ENCODE measurements at regions of chr1 and their contacts with region 1.

Region 1: GRCh38 chr1:53878492-53879105 is 11.0 kb downstream of the YIPF1 start:
- DNase-seq: peak; percentile 58
- H3K4me3 ChIP-seq: no peak overlapping the region
- H3K27ac ChIP-seq: no peak overlapping the region
- H3K4me1 ChIP-seq: no peaks in the 10 kb centered on the region
- H3K27me3 ChIP-seq: no peaks in the 10 kb centered on the region
- CTCF ChIP-seq: peak; percentile 43 to 55
- POLR2A ChIP-seq: no peak

Region 2: GRCh38 chr1:53860967-53861411 is 17.6 kb before region 1 on chr1:
- CTCF ChIA-PET with region 1: interaction called, 61 read pairs
- POLR2A ChIA-PET with region 1: no interaction called
- dilution Hi-C with region 1: no loop called
- intact Hi-C with region 1: no loop called
- DNase-seq: peak; percentile 51
- H3K4me3 ChIP-seq: no peak overlapping the region
- H3K27ac ChIP-seq: no peak overlapping the region
- H3K4me1 ChIP-seq: no peaks in the 10 kb centered on the region
- H3K27me3 ChIP-seq: no peaks in the 10 kb centered on the region
- CTCF ChIP-seq: peak; percentile 79 to 85
- POLR2A ChIP-seq: no peak

Region 3: DNA sequence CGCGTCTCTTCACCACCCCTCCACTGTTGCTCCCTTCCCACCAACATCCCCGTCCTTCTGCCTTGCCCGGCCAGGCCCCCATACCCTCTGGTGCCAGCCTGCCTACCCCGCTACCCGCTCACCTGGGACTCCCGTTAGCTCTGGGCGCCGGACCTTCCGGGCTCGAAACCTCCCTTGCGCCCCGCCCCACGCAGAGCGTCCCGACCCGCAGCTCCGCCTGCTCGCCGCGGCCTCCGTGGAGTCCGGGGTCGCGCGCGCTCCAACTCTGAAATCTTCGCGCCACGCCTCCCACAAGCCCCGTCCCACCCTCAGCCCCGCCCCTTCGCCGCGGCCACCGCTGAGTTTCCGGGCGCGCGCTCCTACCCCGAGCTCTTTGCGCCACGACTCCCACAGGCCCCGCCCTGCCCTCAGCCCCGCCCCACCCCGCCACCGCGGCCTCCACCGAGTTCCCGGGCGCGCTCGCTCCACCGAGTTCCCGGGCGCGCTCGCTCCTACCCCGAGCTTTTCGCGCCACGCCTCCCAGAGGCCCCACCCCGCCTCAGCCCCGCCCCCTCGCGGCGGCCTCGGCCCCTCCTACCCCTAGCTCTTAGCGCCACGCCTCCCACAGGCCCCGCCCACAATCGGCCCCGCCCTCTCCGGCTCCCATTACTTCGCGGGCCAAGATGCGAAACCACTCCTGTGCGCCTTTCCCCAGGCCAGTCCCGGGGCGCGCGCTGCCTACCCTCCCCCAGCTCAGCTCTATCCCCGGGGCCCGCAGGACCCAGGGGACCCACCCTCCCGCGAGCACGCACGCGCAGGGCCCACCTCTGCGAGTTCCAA is 67.0 kb after region 1 on chr1 and contains the start of gene IFT25:
- CTCF ChIA-PET with region 1: interaction called, 63 read pairs
- POLR2A ChIA-PET with region 1: no interaction called
- dilution Hi-C with region 1: no loop called
- intact Hi-C with region 1: loop called (anchors 1 kb)
- DNase-seq: peak; percentile 95
- H3K4me3 ChIP-seq: peak within 1 kb of the TSS; percentile 88 to 95 (median 91)
- H3K27ac ChIP-seq: peak within 1 kb of the TSS; percentile 43
- H3K4me1 ChIP-seq: peaks cover 20% of the 10 kb centered on the region
- H3K27me3 ChIP-seq: no peaks in the 10 kb centered on the region
- CTCF ChIP-seq: no peak
- POLR2A ChIP-seq: peak; percentile 77
- total RNA-seq, gene IFT25: 31.4 and 34.0 TPM in 2 replicates

Region 4: DNA sequence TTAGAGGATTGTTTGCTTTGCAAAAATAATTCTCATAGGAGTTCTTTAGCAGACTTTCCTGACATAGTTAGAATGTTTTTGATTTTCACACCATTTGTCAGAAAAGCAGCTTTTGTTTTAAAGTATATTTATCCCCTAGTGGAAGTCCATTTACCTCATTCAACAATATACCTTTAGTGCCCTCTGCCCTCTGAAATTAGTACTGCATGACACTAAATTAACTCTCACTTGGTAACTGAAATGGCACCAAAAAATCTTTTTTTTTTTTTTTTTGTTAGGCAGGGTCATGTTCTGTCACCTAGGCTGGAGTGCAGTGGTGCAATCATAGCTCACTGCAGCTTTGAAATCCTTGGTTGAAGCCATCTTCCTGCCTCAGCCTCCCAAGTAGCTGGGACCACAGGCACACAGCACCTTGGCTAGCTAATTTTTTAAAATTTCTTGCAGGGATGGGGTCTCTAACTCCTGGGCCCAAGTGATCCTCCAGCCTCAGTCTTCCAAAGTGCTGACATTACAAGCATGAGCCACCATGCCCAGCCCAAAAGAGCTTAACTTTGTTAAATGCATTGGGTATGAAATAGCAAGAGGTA is 81.2 kb after region 1 on chr1:
- CTCF ChIA-PET with region 1: interaction called, 54 read pairs
- POLR2A ChIA-PET with region 1: no interaction called
- dilution Hi-C with region 1: no loop called
- intact Hi-C with region 1: no loop called
- DNase-seq: peak; percentile 28
- H3K4me3 ChIP-seq: no peak overlapping the region
- H3K27ac ChIP-seq: no peak overlapping the region
- H3K4me1 ChIP-seq: peaks cover 7% of the 10 kb centered on the region
- H3K27me3 ChIP-seq: no peaks in the 10 kb centered on the region
- CTCF ChIP-seq: peak; percentile 19 to 25
- POLR2A ChIP-seq: no peak

Region 5: DNA sequence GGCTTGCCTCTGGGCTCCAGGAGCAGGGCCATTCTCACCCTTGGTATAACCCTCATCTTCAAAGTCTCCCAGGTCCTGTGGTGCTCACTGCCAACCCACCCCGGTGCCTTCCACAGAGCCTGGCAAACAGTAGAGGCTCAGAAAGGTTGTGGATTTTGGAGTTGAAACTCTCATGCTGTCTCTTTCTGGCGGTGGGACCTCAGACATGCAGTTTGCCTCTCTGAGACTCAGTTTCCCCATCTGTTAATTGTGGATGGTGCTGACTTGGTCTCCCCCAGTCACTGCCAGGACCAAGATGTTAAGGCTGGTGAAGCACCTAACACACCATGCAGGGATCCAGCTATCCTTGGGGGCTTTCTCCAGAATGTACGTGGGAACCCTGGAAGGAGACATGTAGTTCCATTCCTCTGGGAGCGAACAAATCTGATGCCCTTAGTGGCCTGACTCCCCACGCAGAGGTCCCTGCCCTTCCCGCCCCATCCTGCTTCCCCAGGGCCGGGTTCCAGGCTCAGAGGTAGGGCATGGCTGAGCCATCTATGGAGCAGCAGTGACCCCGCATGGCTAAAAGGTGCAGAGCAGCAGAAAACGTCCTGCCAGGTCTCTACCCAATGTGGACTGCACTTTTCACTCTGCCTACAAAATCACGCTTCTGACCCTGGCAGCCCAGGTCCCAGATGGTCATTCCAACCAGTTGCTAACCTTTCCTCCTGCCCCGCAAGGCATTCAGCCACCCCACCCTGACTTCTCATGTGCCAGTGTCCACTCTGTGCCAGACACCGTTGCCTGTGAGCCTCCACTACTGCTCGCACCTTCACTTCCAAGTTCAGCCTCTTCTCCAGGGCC is 931.7 kb after region 1 on chr1:
- CTCF ChIA-PET with region 1: interaction called, 11 read pairs
- POLR2A ChIA-PET with region 1: no interaction called
- dilution Hi-C with region 1: no loop called
- intact Hi-C with region 1: loop called (anchors 1 kb)
- DNase-seq: peak; percentile 54
- H3K4me3 ChIP-seq: no peak overlapping the region
- H3K27ac ChIP-seq: no peak overlapping the region
- H3K4me1 ChIP-seq: no peaks in the 10 kb centered on the region
- H3K27me3 ChIP-seq: no peaks in the 10 kb centered on the region
- CTCF ChIP-seq: peak; percentile 76 to 89
- POLR2A ChIP-seq: no peak